Panc1 (cell line): ENCODE measurements at regions of chr11 and their contacts with region 1.

Region 1: GRCh38 chr11:35799655-35800054 is 137.1 kb downstream of the TRIM44 start:
- DNase-seq: no peak
- ATAC-seq: no peak
- H3K4me3 ChIP-seq: no peak overlapping the region
- H3K27ac ChIP-seq: no peak overlapping the region
- H3K4me1 ChIP-seq: peaks cover 18% of the 10 kb centered on the region
- H3K27me3 ChIP-seq: no peaks in the 10 kb centered on the region
- CTCF ChIP-seq: peak; percentile 16; the same call in 1 of the 2 replicates

Region 2: GRCh38 chr11:34869426-34869825 is 930.2 kb before region 1 on chr11:
- CTCF ChIA-PET with region 1: interaction called, 16 read pairs
- POLR2A ChIA-PET with region 1: no interaction called
- in situ Hi-C with region 1: no loop called
- intact Hi-C with region 1: no loop called
- DNase-seq: no peak
- ATAC-seq: peak; percentile 74; the same call in 1 of the 2 replicates
- H3K4me3 ChIP-seq: no peak overlapping the region
- H3K27ac ChIP-seq: no peak overlapping the region
- H3K4me1 ChIP-seq: no peaks in the 10 kb centered on the region
- H3K27me3 ChIP-seq: no peaks in the 10 kb centered on the region
- CTCF ChIP-seq: peak; percentile 36; the same call in 1 of the 2 replicates

Region 3: DNA sequence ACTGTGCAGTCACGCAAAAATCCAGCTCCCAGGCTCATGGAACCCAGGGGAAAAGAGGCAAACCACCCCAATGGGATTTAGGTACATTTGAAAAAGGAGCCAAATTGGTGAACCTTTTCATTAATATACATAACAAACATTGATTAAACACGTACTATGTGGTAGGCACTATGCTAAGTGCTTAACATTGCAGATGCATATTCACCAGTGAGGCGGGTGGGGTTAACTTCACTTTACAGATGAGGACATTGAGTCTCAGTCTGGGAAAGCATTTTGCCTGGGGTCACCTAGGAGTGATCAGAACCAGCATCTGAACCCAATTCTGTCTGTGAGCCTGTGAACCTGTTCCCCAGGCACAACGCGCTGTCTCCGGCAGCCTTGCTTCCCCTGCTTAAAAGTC is 343.2 kb after region 1 on chr11:
- CTCF ChIA-PET with region 1: no interaction called
- POLR2A ChIA-PET with region 1: interaction called, 11 read pairs
- in situ Hi-C with region 1: no loop called
- intact Hi-C with region 1: no loop called
- DNase-seq: no peak
- ATAC-seq: no peak
- H3K4me3 ChIP-seq: no peak overlapping the region
- H3K27ac ChIP-seq: no peak overlapping the region
- H3K4me1 ChIP-seq: peaks cover 8% of the 10 kb centered on the region; the same call in 1 of the 2 replicates
- H3K27me3 ChIP-seq: no peaks in the 10 kb centered on the region
- CTCF ChIP-seq: no peak